MCF 10A (cell line): ENCODE measurements at regions of chr1 and their contacts with region 1.

Region 1: GRCh38 chr1:37807555-37808368 is at the starts of genes C1orf122 and YRDC:
- DNase-seq: peak; percentile 92
- H3K4me3 Mint-ChIP-seq: peak within 1 kb of the TSS; percentile 89
- H3K27ac Mint-ChIP-seq: peak within 1 kb of the TSS; percentile 96
- H3K4me1 Mint-ChIP-seq: peaks cover 10% of the 10 kb centered on the region
- H3K27me3 Mint-ChIP-seq: no peaks in the 10 kb centered on the region
- CTCF ChIP-seq: no peak
- total RNA-seq, gene C1orf122: 72.4 and 81.5 TPM in 2 replicates
- total RNA-seq, gene YRDC: 40.4 and 41.5 TPM in 2 replicates

Region 2: GRCh38 chr1:37479255-37480124 is 328.3 kb before region 1 on chr1:
- CTCF ChIA-PET with region 1: no interaction called
- POLR2A ChIA-PET with region 1: interaction called, 13 read pairs
- intact Hi-C with region 1: loop called (anchors 10 kb)
- DNase-seq: peak; percentile 99
- H3K4me3 Mint-ChIP-seq: peak overlapping the region; percentile 89
- H3K27ac Mint-ChIP-seq: peak overlapping the region; percentile 93
- H3K4me1 Mint-ChIP-seq: peaks cover 37% of the 10 kb centered on the region
- H3K27me3 Mint-ChIP-seq: no peaks in the 10 kb centered on the region
- CTCF ChIP-seq: no peak

Region 3: DNA sequence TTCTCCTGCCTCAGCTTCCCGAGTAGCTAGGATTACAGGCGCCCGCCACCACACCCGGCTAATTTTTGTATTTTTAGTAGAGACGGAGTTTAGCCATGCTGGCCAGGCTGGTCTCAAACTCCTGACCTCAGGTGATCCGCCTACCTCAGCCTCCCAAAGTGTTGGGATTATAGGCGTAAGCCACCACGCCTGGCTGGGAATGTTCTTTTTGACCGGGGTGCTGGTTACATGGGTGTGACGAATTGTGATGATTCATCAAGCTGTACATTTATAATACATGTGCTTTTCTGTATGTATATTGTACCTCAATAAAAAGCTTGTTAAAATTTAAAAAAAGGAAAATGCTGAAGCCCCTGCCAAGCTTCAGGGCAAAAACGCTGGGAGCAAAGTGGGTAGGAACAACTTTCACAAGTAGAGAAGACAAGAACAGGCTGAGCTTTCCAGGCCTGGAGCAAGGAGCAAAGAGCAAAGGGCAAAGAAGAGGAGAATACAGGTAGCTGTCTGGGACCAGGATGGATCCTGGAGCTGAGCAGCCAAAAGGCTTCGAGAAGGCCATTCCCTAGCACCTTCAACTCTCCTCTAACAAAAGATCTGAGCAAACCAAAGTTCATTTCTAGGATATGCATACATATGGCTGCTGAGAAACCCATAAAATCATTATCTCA is 20.8 kb after region 1 on chr1:
- CTCF ChIA-PET with region 1: interaction called, 3 read pairs
- POLR2A ChIA-PET with region 1: interaction called, 20 read pairs
- intact Hi-C with region 1: no loop called
- DNase-seq: peak; percentile 30
- H3K4me3 Mint-ChIP-seq: no peak overlapping the region
- H3K27ac Mint-ChIP-seq: peak overlapping the region; percentile 86
- H3K4me1 Mint-ChIP-seq: peaks cover 17% of the 10 kb centered on the region
- H3K27me3 Mint-ChIP-seq: no peaks in the 10 kb centered on the region
- CTCF ChIP-seq: no peak

Region 4: GRCh38 chr1:37859507-37860345 is 52.0 kb after region 1 on chr1 and contains the start of gene MTF1:
- CTCF ChIA-PET with region 1: interaction called, 29 read pairs
- POLR2A ChIA-PET with region 1: interaction called, 59 read pairs
- intact Hi-C with region 1: loop called (anchors 1 kb)
- DNase-seq: peak; percentile 98
- H3K4me3 Mint-ChIP-seq: peak within 1 kb of the TSS; percentile 85
- H3K27ac Mint-ChIP-seq: peak within 1 kb of the TSS; percentile 68
- H3K4me1 Mint-ChIP-seq: peaks cover 12% of the 10 kb centered on the region
- H3K27me3 Mint-ChIP-seq: no peaks in the 10 kb centered on the region
- CTCF ChIP-seq: peak; percentile 88
- total RNA-seq, gene MTF1: 28.4 and 34.7 TPM in 2 replicates

Region 5: DNA sequence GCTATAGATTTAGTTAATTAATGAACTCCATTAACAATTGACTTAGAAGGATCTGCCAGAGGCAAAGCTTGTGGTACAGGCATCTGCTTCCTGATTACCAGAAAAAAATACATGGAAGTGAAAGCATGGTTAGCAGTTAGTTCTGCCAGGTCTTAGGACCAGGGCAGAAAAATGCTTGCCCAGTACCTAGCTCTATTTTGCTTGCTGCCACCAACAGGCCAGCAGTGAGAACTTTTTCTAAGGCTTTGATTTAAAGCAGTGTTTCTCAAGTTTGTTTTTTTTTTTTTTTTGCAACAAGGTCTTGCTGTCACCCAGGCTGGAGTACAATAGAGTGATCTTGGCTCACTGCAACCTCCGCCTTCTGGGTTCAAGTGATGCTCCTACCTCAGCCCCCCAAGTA is 68.1 kb after region 1 on chr1:
- CTCF ChIA-PET with region 1: no interaction called
- POLR2A ChIA-PET with region 1: interaction called, 4 read pairs
- intact Hi-C with region 1: loop called (anchors 1 kb)
- DNase-seq: peak; percentile 38
- H3K4me3 Mint-ChIP-seq: no peak overlapping the region
- H3K27ac Mint-ChIP-seq: no peak overlapping the region
- H3K4me1 Mint-ChIP-seq: no peaks in the 10 kb centered on the region
- H3K27me3 Mint-ChIP-seq: no peaks in the 10 kb centered on the region
- CTCF ChIP-seq: peak; percentile 36